Activated CD4-positive, alpha-beta T cell treated with anti-CD3 and anti-CD28 coated beads for 36 hours (primary cell): ENCODE measurements at regions of chr1 and their contacts with region 1.

Region 1: GRCh38 chr1:243850452-243851256 is 611 bp upstream of the AKT3 start:
- DNase-seq: peak; percentile 92
- ATAC-seq: peak; percentile 50
- H3K4me3 Mint-ChIP-seq: peak overlapping the region; percentile 70
- H3K27ac Mint-ChIP-seq: peak overlapping the region; percentile 92
- H3K4me1 Mint-ChIP-seq: peaks cover 33% of the 10 kb centered on the region
- H3K27me3 Mint-ChIP-seq: peaks cover 2% of the 10 kb centered on the region

Region 2: DNA sequence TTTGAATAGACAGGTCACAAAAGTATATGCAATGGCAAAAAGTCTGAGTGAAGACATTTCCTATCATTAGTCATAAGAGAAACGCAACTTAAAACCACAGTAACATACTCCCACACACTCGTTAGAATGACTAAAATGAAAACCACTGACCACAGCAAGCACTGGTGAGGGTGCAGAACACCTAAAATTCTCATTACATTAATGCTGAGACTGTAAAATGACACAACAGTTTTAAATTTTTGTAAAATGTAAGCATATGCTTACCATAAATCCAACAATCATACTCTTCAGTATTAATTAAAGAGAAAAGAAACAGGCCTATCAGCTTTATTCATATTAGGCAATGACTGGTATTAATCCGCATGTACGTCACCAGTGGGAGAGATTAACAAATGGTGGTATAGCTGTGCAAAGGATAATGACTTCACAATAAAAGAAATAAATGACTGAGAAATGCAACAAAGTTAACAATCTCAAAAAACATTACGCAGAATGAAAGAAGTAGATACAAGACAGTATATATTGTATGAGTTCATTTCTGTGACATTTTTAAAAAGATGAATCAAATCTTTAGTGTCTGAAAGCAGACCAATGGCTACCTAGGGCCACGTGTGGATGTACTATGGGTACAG is 254.1 kb before region 1 on chr1:
- CTCF ChIA-PET with region 1: no interaction called
- POLR2A ChIA-PET with region 1: no interaction called
- intact Hi-C with region 1: loop called in 1 of 2 experiments (anchors 1 kb)
- DNase-seq: peak; percentile 51
- ATAC-seq: peak; percentile 61
- H3K4me3 Mint-ChIP-seq: peak overlapping the region; percentile 23
- H3K27ac Mint-ChIP-seq: peak overlapping the region; percentile 79
- H3K4me1 Mint-ChIP-seq: peaks cover 30% of the 10 kb centered on the region
- H3K27me3 Mint-ChIP-seq: no peaks in the 10 kb centered on the region

Region 3: GRCh38 chr1:243814718-243815117 is 35.9 kb before region 1 on chr1:
- CTCF ChIA-PET with region 1: no interaction called
- POLR2A ChIA-PET with region 1: no interaction called
- intact Hi-C with region 1: no loop called
- DNase-seq: no peak
- ATAC-seq: no peak
- H3K4me3 Mint-ChIP-seq: no peak overlapping the region
- H3K27ac Mint-ChIP-seq: no peak overlapping the region
- H3K4me1 Mint-ChIP-seq: peaks cover 9% of the 10 kb centered on the region
- H3K27me3 Mint-ChIP-seq: no peaks in the 10 kb centered on the region

Region 4: GRCh38 chr1:243831463-243831862 is 19.2 kb before region 1 on chr1:
- CTCF ChIA-PET with region 1: no interaction called
- POLR2A ChIA-PET with region 1: no interaction called
- intact Hi-C with region 1: loop called in 1 of 2 experiments (anchors 1 kb)
- DNase-seq: no peak
- ATAC-seq: peak; percentile 78
- H3K4me3 Mint-ChIP-seq: no peak overlapping the region
- H3K27ac Mint-ChIP-seq: peak overlapping the region; percentile 48
- H3K4me1 Mint-ChIP-seq: peaks cover 39% of the 10 kb centered on the region
- H3K27me3 Mint-ChIP-seq: no peaks in the 10 kb centered on the region

Region 5: GRCh38 chr1:243890576-243890975 is 39.9 kb after region 1 on chr1:
- CTCF ChIA-PET with region 1: no interaction called
- POLR2A ChIA-PET with region 1: no interaction called
- intact Hi-C with region 1: no loop called
- DNase-seq: no peak
- ATAC-seq: no peak
- H3K4me3 Mint-ChIP-seq: no peak overlapping the region
- H3K27ac Mint-ChIP-seq: no peak overlapping the region
- H3K4me1 Mint-ChIP-seq: no peaks in the 10 kb centered on the region
- H3K27me3 Mint-ChIP-seq: peaks cover 3% of the 10 kb centered on the region

Region 6: DNA sequence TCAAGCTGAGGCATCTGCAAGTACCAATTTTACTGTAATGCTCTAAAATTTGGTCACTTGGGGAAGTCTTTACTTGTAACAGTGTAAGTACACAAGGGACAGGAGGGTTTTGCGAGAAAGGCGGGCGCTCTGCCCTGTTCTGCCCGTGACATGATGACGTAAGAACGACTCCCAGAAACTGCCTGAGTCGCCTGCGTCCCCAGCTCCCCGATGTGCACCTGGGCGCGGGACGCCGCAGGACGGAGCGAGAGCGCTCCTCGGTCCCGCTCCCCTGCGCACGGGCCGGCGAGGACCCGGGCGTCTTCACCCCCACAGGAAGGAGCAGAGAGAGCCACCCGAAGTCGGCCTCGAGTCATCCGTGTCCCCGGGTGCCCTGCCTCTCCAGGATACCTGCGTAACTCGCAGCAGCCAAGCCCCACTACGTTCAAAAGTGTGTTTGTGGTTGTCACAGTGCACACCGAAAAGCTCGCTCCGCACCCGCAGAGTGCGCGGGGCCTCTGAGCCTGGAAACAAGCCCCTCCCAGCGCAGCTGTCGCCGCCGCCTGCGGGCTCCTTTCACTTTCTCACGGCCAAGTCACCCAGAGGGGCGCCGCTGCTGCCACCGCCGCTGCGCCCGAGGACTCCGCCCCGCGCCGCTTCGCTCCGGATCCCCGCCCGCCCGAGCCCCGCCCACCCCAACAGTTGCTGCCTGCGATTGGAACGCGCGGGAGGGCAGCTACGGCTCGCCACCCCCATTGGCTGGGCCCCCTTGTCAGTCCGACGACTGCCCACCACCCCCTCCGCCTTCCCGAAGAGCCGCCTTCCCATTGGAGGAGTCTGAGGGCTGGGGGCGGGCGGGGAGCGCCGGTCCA is 197.2 kb after region 1 on chr1:
- CTCF ChIA-PET with region 1: no interaction called
- POLR2A ChIA-PET with region 1: interaction called, 3 read pairs
- intact Hi-C with region 1: loop called (anchors 1 to 2 kb)
- DNase-seq: peak; percentile 98
- ATAC-seq: peak; percentile 92
- H3K4me3 Mint-ChIP-seq: peak overlapping the region; percentile 93
- H3K27ac Mint-ChIP-seq: peak overlapping the region; percentile 97
- H3K4me1 Mint-ChIP-seq: peaks cover 35% of the 10 kb centered on the region
- H3K27me3 Mint-ChIP-seq: no peaks in the 10 kb centered on the region

Region 7: DNA sequence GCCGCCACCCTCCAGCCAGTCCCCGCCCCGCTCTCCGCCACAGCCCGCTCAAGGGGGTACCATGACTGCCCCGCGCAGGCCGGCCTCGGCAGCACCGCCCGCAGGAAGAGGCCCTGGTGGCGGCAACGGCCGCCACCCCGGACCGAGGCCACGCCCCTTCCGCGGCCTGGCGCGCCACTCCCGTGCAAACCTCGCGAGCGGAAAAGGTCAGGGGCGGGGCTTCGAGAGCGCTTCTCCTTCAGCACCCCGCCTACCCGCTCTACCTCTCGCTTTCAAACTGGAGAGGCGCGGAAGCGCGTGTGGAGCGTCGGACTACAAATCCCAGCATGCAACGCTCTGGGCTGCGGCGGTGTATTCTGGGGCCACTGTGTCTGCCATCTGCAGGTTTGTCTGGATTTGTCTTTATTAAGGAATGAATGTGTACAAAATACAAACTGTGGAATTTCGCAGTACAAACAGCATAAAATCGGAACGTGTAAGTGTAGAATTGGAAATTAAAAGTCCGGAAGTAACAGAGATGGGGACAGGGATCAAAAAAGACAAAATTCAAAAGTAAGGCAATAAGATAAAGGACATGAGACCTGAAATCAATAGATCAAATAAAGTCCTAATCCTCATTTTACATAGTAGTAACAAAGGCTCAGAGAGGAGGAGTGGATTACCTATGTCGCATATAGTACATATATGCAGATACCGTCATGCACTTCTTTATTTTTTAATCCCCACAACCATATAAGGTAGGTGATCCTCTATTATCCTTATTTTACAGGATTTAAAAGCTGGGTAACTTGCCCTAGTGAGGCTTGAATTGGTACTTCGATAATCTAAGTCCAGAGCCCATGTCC is 601.5 kb after region 1 on chr1:
- CTCF ChIA-PET with region 1: no interaction called
- POLR2A ChIA-PET with region 1: no interaction called
- intact Hi-C with region 1: loop called (anchors 1 to 5 kb)
- DNase-seq: peak; percentile 99
- ATAC-seq: peak; percentile 91
- H3K4me3 Mint-ChIP-seq: peak overlapping the region; percentile 97
- H3K27ac Mint-ChIP-seq: peak overlapping the region; percentile 97
- H3K4me1 Mint-ChIP-seq: peaks cover 40% of the 10 kb centered on the region
- H3K27me3 Mint-ChIP-seq: no peaks in the 10 kb centered on the region